ENCODE measurements at regions of chr6 and their contacts with region 1.

Region 1: DNA sequence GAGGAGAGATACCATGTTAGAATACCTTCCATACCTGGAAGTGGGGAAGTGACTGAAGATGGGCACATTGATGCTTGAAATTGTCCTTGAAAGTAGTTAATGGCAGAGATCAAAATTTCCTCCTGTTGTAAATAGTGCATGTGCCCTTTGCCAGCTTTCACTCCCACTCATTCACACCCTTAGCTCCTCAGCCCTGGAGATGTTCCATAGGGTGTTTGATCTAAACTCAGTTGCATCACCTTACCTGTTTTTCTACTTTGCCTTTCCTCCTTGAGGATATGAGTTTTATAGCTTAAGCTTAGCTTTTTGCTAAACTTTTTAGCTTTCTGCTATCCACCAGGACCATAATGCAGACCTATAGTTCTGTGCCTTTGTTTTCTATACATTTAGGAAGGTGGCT is 69.0 kb downstream of the CEP57L1 start:
- DNase-seq: no peak
- H3K4me3 Mint-ChIP-seq: no peak overlapping the region
- H3K27ac Mint-ChIP-seq: no peak overlapping the region
- H3K4me1 Mint-ChIP-seq: no peaks in the 10 kb centered on the region
- H3K27me3 Mint-ChIP-seq: no peaks in the 10 kb centered on the region

Region 2: GRCh38 chr6:108835218-108835850 is 329.0 kb before region 1 on chr6:
- CTCF ChIA-PET with region 1: no interaction called
- intact Hi-C with region 1: no loop called
- DNase-seq: peak; percentile 92
- H3K4me3 Mint-ChIP-seq: no peak overlapping the region
- H3K27ac Mint-ChIP-seq: no peak overlapping the region
- H3K4me1 Mint-ChIP-seq: peaks cover 19% of the 10 kb centered on the region
- H3K27me3 Mint-ChIP-seq: peaks cover 3% of the 10 kb centered on the region

Region 3: GRCh38 chr6:109125504-109125903 is 38.8 kb before region 1 on chr6:
- CTCF ChIA-PET with region 1: no interaction called
- intact Hi-C with region 1: loop called (anchors 1 kb)
- DNase-seq: no peak
- H3K4me3 Mint-ChIP-seq: no peak overlapping the region
- H3K27ac Mint-ChIP-seq: no peak overlapping the region
- H3K4me1 Mint-ChIP-seq: peaks cover 11% of the 10 kb centered on the region
- H3K27me3 Mint-ChIP-seq: no peaks in the 10 kb centered on the region

Region 4: DNA sequence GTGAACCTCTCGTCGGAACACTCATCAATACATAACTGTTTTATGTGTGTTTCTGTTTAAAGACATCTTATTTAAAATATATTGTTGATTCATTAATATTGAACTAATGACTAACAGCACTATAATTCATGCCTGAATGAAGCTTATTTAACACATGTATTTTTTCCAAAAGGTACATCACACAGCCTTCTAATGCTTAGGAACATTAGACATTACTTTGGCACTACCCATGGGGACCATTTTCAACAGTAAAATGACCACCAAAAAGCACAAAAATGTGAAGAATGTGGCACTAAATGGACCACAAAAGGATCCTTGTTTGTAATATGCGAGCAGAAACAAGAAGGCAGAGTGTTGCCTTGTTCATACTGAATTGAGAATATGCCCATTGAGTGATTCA is 40.2 kb after region 1 on chr6:
- CTCF ChIA-PET with region 1: no interaction called
- intact Hi-C with region 1: no loop called
- DNase-seq: no peak
- H3K4me3 Mint-ChIP-seq: no peak overlapping the region
- H3K27ac Mint-ChIP-seq: no peak overlapping the region
- H3K4me1 Mint-ChIP-seq: peaks cover 7% of the 10 kb centered on the region
- H3K27me3 Mint-ChIP-seq: no peaks in the 10 kb centered on the region

Region 5: GRCh38 chr6:110102411-110102810 is 938.1 kb after region 1 on chr6:
- CTCF ChIA-PET with region 1: no interaction called
- intact Hi-C with region 1: no loop called
- DNase-seq: no peak
- H3K4me3 Mint-ChIP-seq: no peak overlapping the region
- H3K27ac Mint-ChIP-seq: no peak overlapping the region
- H3K4me1 Mint-ChIP-seq: no peaks in the 10 kb centered on the region
- H3K27me3 Mint-ChIP-seq: no peaks in the 10 kb centered on the region

Measured in activated naive CD4-positive, alpha-beta T cell treated with anti-CD3 and anti-CD28 coated beads for 36 hours (primary cell).